ENCODE measurements at regions of chr1 and their contacts with region 1.

Region 1: DNA sequence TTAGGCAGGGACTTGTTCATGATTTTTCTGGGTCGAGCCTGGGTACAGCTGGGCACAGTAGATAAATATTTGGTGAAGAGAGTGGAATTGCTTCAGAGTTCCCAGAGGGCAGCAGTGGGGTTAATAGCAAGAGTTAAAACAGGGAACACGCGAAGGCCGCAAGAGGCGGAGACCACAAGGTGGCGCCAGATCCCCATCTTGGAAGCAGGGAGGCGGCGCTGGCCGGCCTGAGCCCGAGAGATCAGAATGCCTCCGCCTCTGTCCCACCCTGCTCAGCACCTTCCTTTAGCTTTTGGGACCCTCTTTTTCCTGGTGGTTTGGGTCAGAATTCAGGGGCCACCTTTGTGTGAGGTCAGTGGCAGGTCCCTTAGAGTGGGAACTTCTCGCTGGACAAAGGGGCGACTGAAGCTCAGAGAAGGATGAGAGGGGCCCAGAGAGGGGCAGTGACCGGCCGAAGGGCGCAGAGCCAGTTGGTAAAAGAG is 6.5 kb upstream of the PADI2 start:
- DNase-seq: peak; percentile 90 to 94 (median 91)
- ATAC-seq: peak; percentile 99
- H3K4me3 ChIP-seq: no peak overlapping the region
- H3K27ac ChIP-seq: no peak overlapping the region
- H3K4me1 ChIP-seq: no peaks in the 10 kb centered on the region
- H3K27me3 ChIP-seq: peaks cover 26 to 35% of the 10 kb centered on the region in 2 experiments
- CTCF ChIP-seq: peak; percentile 97 to 99 (median 98)
- EP300 ChIP-seq: 0 out of 2 replicates have a peak, but pooled peaks have one; percentile 9
- POLR2A ChIP-seq: no peak
- RAD21 ChIP-seq: peak; percentile 96 to 99

Region 2: DNA sequence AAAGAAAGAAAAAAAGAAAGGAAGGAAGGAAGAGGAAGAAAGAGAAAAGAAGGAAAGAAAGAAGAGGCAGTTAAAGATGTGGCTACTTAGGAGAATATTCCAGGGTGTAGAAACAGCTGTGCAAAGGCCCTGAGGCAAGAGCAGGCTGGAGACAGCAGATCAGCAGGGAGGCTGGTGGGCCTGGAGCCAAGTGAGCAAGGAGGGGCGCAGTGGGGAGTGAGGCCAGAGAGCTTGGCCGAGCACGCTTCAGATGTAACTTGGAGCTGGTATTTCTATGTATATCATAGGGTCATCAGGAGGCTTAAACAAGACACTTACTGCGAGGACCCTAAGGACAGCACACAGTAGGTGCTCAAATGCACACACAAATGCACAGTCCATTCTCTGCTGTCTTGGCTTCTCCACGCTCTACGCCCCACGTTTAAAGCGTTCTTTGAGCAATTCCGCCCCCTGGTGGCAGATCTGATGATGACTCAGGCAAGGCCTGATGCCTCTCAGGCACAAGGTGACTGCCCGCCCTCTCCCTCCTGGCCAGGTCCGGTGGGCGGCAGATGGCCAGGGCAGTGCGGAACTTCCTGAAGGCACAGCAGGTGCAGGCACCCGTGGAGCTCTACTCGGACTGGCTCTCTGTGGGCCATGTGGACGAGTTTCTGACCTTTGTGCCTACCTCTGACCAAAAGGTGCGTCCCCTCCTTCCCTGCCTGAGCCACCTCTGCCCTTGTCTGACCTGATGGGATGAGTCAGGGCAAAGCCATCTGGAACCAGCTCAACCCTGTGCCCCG is 111.2 kb after region 1 on chr1:
- CTCF ChIA-PET with region 1: interaction called, 58 read pairs
- POLR2A ChIA-PET with region 1: interaction called, 3 read pairs
- in situ Hi-C with region 1: loop called (anchors 5 kb)
- intact Hi-C with region 1: loop called (anchors 1 kb)
- DNase-seq: peak; percentile 87 to 92 (median 91)
- ATAC-seq: peak; percentile 97
- H3K4me3 ChIP-seq: no peak overlapping the region
- H3K27ac ChIP-seq: no peak overlapping the region
- H3K4me1 ChIP-seq: peaks cover 0 to 3% of the 10 kb centered on the region in 2 experiments; a peak in 1 of 5 replicates
- H3K27me3 ChIP-seq: peaks cover 13 to 53% of the 10 kb centered on the region in 2 experiments; a peak in 4 of 5 replicates
- CTCF ChIP-seq: peak; percentile 91 to 95 (median 94)
- EP300 ChIP-seq: no peak
- POLR2A ChIP-seq: no peak
- RAD21 ChIP-seq: peak; percentile 79 to 98

Region 3: DNA sequence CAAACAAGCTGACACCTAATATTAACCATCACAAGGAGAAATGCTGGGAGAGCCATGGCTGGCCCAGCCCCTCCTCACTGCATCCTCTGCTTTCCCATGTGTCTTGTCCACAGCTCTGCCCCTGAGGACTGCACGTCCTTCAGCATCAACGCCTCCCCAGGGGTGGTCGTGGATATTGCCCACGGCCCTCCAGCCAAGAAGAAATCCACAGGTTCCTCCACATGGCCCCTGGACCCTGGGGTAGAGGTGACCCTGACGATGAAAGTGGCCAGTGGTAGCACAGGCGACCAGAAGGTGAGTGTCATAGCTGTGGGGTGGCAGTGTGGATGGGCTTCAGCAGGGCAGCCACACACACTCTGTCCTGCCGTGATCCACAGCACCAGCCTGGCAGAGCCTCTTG is 205.1 kb after region 1 on chr1:
- CTCF ChIA-PET with region 1: interaction called, 11 read pairs
- POLR2A ChIA-PET with region 1: no interaction called
- in situ Hi-C with region 1: loop called (anchors 5 kb)
- intact Hi-C with region 1: loop called (anchors 2 kb)
- DNase-seq: no peak
- ATAC-seq: no peak
- H3K4me3 ChIP-seq: no peak overlapping the region
- H3K27ac ChIP-seq: no peak overlapping the region
- H3K4me1 ChIP-seq: no peaks in the 10 kb centered on the region; a peak in 1 of 5 replicates
- H3K27me3 ChIP-seq: peaks cover 14 to 36% of the 10 kb centered on the region in 2 experiments
- CTCF ChIP-seq: no peak
- EP300 ChIP-seq: no peak
- POLR2A ChIP-seq: no peak
- RAD21 ChIP-seq: no peak

Region 4: GRCh38 chr1:17405898-17406759 is 280.3 kb after region 1 on chr1:
- CTCF ChIA-PET with region 1: interaction called, 3 read pairs
- POLR2A ChIA-PET with region 1: no interaction called
- in situ Hi-C with region 1: loop called (anchors 10 kb)
- intact Hi-C with region 1: loop called (anchors 10 kb)
- DNase-seq: peak; percentile 81 to 84 (median 82)
- ATAC-seq: peak; percentile 94
- H3K4me3 ChIP-seq: no peak overlapping the region
- H3K27ac ChIP-seq: no peak overlapping the region
- H3K4me1 ChIP-seq: peaks cover 13 to 40% of the 10 kb centered on the region in 2 experiments; a peak in 4 of 5 replicates
- H3K27me3 ChIP-seq: no peaks in the 10 kb centered on the region
- CTCF ChIP-seq: peak; percentile 90 to 96 (median 94)
- EP300 ChIP-seq: no peak
- POLR2A ChIP-seq: peak; percentile 79
- RAD21 ChIP-seq: peak; percentile 39 to 69; a peak in 3 of 4 replicates

Region 5: DNA sequence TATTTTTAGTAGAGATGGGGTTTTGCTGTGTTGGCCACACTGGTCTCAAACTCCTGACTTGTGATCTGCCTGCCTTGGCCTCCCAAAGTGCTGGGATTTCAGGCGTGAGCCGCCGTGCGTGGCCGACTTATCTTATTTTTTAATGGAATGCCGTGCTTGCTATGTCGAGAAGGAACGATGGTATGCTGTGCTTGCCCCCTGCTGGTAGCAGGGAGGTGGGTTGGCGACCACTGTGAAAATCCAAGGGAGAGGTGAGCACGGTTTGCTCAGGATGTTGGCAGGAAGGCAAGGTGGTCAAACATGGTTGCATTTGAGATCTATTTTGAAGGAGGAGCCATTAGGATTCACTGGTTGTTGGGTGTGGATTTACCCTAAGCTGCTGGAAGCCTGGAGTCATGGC is 359.5 kb after region 1 on chr1:
- CTCF ChIA-PET with region 1: no interaction called
- POLR2A ChIA-PET with region 1: no interaction called
- in situ Hi-C with region 1: no loop called
- intact Hi-C with region 1: no loop called
- DNase-seq: peak in 3 of 4 experiments; percentile 37 to 61 (median 51)
- ATAC-seq: peak; percentile 48
- H3K4me3 ChIP-seq: no peak overlapping the region
- H3K27ac ChIP-seq: no peak overlapping the region
- H3K4me1 ChIP-seq: peaks cover 20 to 23% of the 10 kb centered on the region in 2 experiments; a peak in 4 of 5 replicates
- H3K27me3 ChIP-seq: no peaks in the 10 kb centered on the region; a peak in 1 of 5 replicates
- CTCF ChIP-seq: peak; percentile 66 to 76 (median 73)
- EP300 ChIP-seq: no peak
- POLR2A ChIP-seq: no peak
- RAD21 ChIP-seq: peak; percentile 26 to 61

Measured in K562 (cell line).